Calu3 (cell line): ENCODE measurements at regions of chr9 and their contacts with region 1.

Region 1: GRCh38 chr9:76658535-76659231 is 105.6 kb upstream of the PCA3 start:
- DNase-seq: no peak
- H3K4me3 Mint-ChIP-seq: no peak overlapping the region
- H3K27ac Mint-ChIP-seq: no peak overlapping the region
- H3K4me1 Mint-ChIP-seq: no peaks in the 10 kb centered on the region
- H3K27me3 Mint-ChIP-seq: no peaks in the 10 kb centered on the region
- CTCF ChIP-seq: no peak

Region 2: DNA sequence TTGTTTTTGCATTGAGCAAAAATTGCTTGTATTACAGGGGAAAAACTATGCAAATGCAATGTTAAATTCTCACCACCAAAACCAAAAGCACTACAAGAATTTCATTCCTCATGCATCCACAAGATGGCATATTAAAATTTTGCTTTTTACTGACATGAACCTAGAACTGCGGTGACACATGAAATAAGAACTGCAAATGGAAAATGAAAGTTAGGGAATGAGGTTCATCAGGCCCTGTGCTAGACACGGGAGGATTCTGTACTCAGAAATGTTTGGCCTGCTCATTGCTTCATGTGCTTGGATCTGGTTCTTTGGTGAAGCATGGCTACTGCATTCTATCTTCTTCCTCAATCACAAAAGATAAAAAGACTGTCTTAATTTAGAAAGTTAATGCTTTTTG is 255.3 kb before region 1 on chr9:
- CTCF ChIA-PET with region 1: interaction called, 3 read pairs
- intact Hi-C with region 1: loop called (anchors 1 kb)
- DNase-seq: no peak
- H3K4me3 Mint-ChIP-seq: peak overlapping the region; percentile 30
- H3K27ac Mint-ChIP-seq: no peak overlapping the region
- H3K4me1 Mint-ChIP-seq: peaks cover 28% of the 10 kb centered on the region
- H3K27me3 Mint-ChIP-seq: no peaks in the 10 kb centered on the region
- CTCF ChIP-seq: peak; percentile 27

Region 3: DNA sequence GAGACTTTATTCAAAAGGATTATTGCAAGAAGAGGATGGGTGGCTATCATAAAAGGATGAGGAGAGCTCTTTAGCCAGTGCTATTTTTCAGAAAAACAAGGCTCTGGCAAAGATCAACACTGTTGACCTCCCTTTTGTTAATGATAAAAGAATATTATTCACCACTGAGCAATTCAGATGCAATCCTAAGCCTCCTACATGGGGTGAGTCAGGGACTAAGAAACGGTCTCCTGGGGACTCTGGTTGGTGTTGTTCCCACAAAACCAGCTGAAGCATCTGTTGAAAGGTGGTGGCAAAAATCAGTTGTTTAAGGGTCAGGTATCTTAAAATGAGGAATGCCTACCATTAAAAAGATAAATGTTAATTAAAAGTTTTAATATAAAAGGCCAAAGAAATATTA is 207.4 kb before region 1 on chr9:
- CTCF ChIA-PET with region 1: interaction called, 7 read pairs
- intact Hi-C with region 1: loop called (anchors 1 kb)
- DNase-seq: no peak
- H3K4me3 Mint-ChIP-seq: no peak overlapping the region
- H3K27ac Mint-ChIP-seq: no peak overlapping the region
- H3K4me1 Mint-ChIP-seq: peaks cover 5% of the 10 kb centered on the region
- H3K27me3 Mint-ChIP-seq: no peaks in the 10 kb centered on the region
- CTCF ChIP-seq: no peak

Region 4: GRCh38 chr9:76704593-76705204 is 46.0 kb after region 1 on chr9:
- CTCF ChIA-PET with region 1: no interaction called
- intact Hi-C with region 1: loop called (anchors 2 kb)
- DNase-seq: peak; percentile 35
- H3K4me3 Mint-ChIP-seq: no peak overlapping the region
- H3K27ac Mint-ChIP-seq: no peak overlapping the region
- H3K4me1 Mint-ChIP-seq: no peaks in the 10 kb centered on the region
- H3K27me3 Mint-ChIP-seq: peaks cover 63% of the 10 kb centered on the region
- CTCF ChIP-seq: peak; percentile 53